ENCODE measurements at regions of chr6 and their contacts with region 1.

Region 1: DNA sequence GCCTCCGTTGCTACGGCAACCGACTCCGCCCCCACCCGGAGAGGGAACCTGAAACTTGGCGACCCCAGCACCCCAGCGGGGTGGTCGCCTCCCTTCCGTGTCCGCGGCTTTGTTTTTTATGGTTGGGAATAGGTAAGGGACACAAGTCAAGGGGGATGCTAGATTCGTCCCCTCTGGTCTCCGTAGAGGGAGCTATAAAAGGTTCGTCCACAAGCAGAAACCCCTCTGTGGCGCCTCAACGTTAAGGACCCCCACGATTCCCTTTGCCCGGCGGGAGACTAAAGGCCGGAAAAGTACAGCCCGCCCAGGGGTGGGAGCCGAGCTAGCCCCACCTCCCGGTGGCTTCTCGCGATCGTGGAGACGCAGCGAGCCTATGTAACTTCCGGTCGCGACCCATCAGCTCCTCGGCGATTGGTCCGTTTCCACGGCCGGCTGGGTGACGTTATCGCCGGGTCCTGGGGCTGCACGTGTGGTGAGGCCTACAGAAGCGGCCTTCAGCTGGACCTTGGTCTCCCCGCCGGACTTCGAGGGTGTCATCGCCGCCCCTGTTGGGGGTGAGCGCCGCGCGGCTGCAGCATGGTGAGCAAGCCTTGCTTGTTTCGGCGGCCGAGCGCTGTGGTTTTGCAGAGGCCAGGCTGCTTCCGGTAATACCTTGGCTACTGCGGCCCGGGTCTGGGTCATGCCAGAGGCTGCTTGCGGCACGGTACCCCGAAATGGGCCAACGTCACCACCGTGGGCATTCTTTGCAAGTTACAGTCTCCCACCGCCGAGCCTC is at the start of gene LTV1:
- DNase-seq: peak; percentile 96 to 97
- ATAC-seq: peak; percentile 99 to 100 (median 100)
- H3K4me3 ChIP-seq: peak within 1 kb of the TSS; percentile 56 to 94 (median 78)
- H3K27ac ChIP-seq: peak within 1 kb of the TSS; percentile 7 to 98 (median 92)
- H3K4me1 ChIP-seq: peaks cover 0 to 19% (median 13%) of the 10 kb centered on the region in 9 donors
- H3K27me3 ChIP-seq: no peaks in the 10 kb centered on the region
- CTCF ChIP-seq: peak in 4 of 9 donors; percentile 9 to 24 (median 19)
- total RNA-seq, gene LTV1: 6.9 to 19.4 (median 12.5) TPM

Region 2: DNA sequence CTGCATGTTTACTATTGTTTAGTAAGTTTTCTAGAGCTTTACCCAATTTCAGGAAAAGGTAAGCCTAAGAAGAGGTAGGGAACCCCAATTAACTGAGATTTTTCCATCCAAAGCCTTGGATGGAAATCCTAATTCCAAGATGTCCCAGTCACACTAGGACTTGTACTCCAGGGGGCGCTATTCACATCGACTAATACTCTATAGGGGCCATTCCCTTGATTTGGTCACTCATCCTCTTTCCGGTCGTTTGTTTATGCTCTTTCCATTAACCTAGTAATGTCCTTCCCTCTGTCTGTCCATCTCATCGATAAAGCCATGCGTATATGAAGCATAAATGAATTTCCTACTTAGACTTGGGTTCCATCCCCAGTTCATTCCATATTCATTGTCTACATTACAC is 250.8 kb before region 1 on chr6:
- intact Hi-C with region 1: loop called in 2 of 10 experiments (anchors 5 to 10 kb)
- DNase-seq: no peak
- ATAC-seq: no peak
- H3K4me3 ChIP-seq: no peak overlapping the region
- H3K27ac ChIP-seq: no peak overlapping the region
- H3K4me1 ChIP-seq: peaks cover 6 to 31% (median 27%) of the 10 kb centered on the region in 9 donors
- H3K27me3 ChIP-seq: no peaks in the 10 kb centered on the region
- CTCF ChIP-seq: peak in 6 of 9 donors; percentile 17 to 39 (median 28)

Region 3: GRCh38 chr6:143677891-143678791 is 164.9 kb before region 1 on chr6 and contains the start of gene PHACTR2:
- intact Hi-C with region 1: loop called in 5 of 10 experiments (anchors 2 to 10 kb)
- DNase-seq: peak; percentile 79 to 86
- ATAC-seq: peak; percentile 88 to 98 (median 92)
- H3K4me3 ChIP-seq: peak within 1 kb of the TSS; percentile 56 to 83 (median 78)
- H3K27ac ChIP-seq: peak within 1 kb of the TSS; percentile 92 to 99 (median 98)
- H3K4me1 ChIP-seq: peaks cover 0 to 68% (median 43%) of the 10 kb centered on the region in 9 donors
- H3K27me3 ChIP-seq: no peaks in the 10 kb centered on the region
- CTCF ChIP-seq: no peak
- total RNA-seq, gene PHACTR2: 50.9 to 96.3 (median 72.6) TPM

Region 4: DNA sequence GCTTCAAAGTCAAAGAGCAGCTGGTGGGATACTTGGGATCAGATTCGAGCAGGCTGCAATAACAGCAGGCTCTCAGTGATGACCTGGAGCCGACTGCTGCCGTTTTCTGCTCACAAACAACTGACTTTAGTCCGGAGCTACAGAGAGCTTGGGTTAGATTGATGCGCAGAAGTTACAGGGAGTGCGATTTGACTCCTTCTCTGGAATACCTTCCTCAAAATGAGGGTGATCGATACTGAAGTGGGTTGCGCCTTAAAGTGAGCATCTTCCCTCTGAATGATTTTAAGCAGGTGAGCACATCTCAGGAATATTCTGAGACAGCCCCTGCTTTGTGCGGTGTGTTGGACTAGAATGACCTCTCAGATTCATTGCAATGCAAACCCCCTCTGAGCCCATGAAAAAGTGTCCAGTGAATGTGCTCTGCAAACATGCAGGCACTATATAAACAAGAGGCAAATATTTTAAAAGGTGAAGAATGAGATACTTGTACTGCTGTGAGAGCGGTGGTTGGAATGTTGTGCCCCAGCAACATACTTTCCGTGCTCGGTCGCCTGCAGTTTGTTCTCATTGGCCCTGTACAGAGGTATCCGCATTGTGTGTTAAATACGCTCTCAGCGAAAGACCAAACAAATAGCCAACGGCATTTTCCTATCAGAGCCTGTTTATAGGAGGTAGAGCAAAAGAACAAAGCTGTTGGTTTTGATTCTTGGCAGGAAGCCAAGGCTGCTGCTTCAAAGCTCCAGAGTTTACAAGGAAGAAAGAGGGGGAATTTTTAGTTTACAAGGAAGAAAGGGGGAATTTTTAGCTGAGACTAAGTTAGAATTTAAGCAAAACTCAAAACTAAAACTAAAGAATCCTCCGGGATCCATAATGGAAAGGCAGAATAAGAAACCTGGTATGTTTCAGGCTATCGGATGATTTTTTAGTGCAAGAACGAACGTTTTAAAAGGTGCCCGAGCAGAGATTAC is 97.6 kb before region 1 on chr6:
- intact Hi-C with region 1: loop called in 1 of 10 experiments (anchors 5 kb)
- DNase-seq: peak in 1 of 2 donors; percentile 52
- ATAC-seq: peak; percentile 26 to 77 (median 61)
- H3K4me3 ChIP-seq: peak overlapping the region in 6 of 10 donors; percentile 2 to 19 (median 14)
- H3K27ac ChIP-seq: peak overlapping the region; percentile 31 to 85 (median 68)
- H3K4me1 ChIP-seq: peaks cover 21 to 91% (median 69%) of the 10 kb centered on the region in 9 donors
- H3K27me3 ChIP-seq: no peaks in the 10 kb centered on the region
- CTCF ChIP-seq: no peak

Region 5: DNA sequence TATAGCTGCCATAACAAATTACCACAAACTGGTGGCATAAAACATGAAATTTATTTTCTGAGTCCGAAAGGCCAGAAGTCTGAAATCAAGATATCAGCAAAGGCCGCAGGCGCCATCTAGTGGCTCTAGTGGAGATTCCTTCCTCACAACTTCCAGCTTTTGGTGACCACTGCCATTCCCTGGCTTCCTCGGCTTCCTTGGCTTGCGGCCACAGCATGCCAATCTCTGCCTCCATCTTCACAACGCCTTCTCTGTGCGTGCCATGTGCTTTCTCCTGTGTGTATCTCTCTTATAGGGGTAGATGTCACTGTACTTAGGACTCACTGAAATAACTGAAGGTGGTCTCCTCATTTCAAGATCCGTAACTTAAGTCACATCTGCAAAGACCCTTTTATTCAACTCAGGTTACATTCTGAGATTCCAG is 170.4 kb after region 1 on chr6:
- intact Hi-C with region 1: loop called in 3 of 10 experiments (anchors 5 to 10 kb)
- DNase-seq: peak; percentile 69 to 75
- ATAC-seq: peak in 7 of 8 donors; percentile 33 to 70 (median 59)
- H3K4me3 ChIP-seq: peak overlapping the region in 1 of 10 donors; percentile 0
- H3K27ac ChIP-seq: no peak overlapping the region
- H3K4me1 ChIP-seq: peaks cover 0 to 7% (median 0%) of the 10 kb centered on the region in 9 donors
- H3K27me3 ChIP-seq: no peaks in the 10 kb centered on the region
- CTCF ChIP-seq: peak; percentile 86 to 97 (median 94)